A549 (cell line): ENCODE measurements at regions of chr12 and their contacts with region 1.

Region 1: GRCh38 chr12:64610149-64610678 is at the start of gene RASSF3:
- DNase-seq: peak; percentile 53 to 71
- ATAC-seq: peak; percentile 60 to 68
- H3K4me3 ChIP-seq: peak within 1 kb of the TSS; percentile 73
- H3K27ac ChIP-seq: peak within 1 kb of the TSS; percentile 83 to 96
- H3K4me1 ChIP-seq: peaks cover 19% of the 10 kb centered on the region
- CTCF ChIP-seq: no peak
- EP300 ChIP-seq: no peak
- POLR2A ChIP-seq: peak; percentile 54
- RAD21 ChIP-seq: no peak
- polyA plus RNA-seq, gene RASSF3: 35.4 and 40.1 TPM in 2 replicates

Region 2: GRCh38 chr12:64544371-64545080 is 65.7 kb before region 1 on chr12:
- CTCF ChIA-PET with region 1: interaction called, 96 read pairs
- POLR2A ChIA-PET with region 1: no interaction called
- DNase-seq: no peak
- ATAC-seq: peak in 1 of 2 experiments; percentile 48; a peak in 2 of 6 replicates
- H3K4me3 ChIP-seq: no peak overlapping the region
- H3K27ac ChIP-seq: no peak overlapping the region
- H3K4me1 ChIP-seq: no peaks in the 10 kb centered on the region
- CTCF ChIP-seq: no peak
- EP300 ChIP-seq: no peak
- POLR2A ChIP-seq: no peak
- RAD21 ChIP-seq: no peak

Region 3: DNA sequence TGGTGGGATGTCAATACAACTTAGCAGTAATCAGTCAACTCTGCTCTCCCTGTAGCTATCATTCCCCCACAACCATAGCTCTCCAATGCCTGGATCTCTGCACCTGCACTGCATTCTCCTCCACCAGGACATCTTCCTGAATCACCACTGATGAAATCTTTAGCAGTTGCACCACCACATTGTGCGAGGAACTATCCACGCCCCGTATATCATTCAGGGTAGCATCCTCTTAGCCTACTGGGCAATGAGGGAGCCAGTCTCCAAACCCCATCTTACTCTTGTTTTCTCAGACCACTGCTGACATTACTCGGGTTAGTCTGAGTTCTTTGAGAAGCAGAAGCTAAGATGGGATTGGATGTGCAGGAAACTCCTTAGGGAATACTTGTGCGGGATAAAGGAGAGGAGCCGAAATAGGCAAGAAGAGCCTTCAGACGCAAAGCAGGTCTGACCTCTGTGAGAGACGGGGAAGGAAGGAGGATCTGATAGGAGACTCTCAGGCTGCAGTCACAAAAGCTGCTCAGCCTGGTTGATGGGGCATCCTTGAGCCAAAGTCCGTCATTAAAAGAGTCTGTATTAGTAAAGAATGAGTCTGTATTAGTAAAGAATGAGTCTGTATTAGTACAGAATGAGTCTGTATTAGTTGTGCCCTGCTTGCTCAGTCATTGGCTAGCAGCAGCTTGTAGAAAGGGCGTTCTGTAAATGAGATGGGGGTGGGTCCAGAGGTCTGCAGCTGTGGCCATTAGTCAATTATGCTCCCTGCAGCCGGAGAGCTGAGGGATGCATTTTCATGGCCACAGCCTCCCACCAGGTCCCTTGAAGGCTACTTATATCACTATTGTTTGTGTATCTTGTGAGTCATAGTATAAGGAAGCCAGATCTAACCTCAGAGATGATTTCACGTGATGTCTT is 49.6 kb before region 1 on chr12:
- CTCF ChIA-PET with region 1: interaction called, 32 read pairs
- POLR2A ChIA-PET with region 1: no interaction called
- DNase-seq: peak; percentile 61 to 67
- ATAC-seq: peak; percentile 92 to 93
- H3K4me3 ChIP-seq: no peak overlapping the region
- H3K27ac ChIP-seq: peak overlapping the region in 1 of 2 experiments; percentile 23; a peak in 2 of 6 replicates
- H3K4me1 ChIP-seq: peaks cover 19% of the 10 kb centered on the region
- CTCF ChIP-seq: no peak
- EP300 ChIP-seq: no peak
- POLR2A ChIP-seq: no peak
- RAD21 ChIP-seq: no peak

Region 4: GRCh38 chr12:64566732-64567399 is 43.3 kb before region 1 on chr12:
- CTCF ChIA-PET with region 1: interaction called, 32 read pairs
- POLR2A ChIA-PET with region 1: interaction called, 3 read pairs
- DNase-seq: no peak
- ATAC-seq: no peak
- H3K4me3 ChIP-seq: no peak overlapping the region
- H3K27ac ChIP-seq: no peak overlapping the region
- H3K4me1 ChIP-seq: peaks cover under 1% of the 10 kb centered on the region; the same call in 2 of the 3 replicates
- CTCF ChIP-seq: no peak
- EP300 ChIP-seq: no peak
- POLR2A ChIP-seq: no peak
- RAD21 ChIP-seq: no peak

Region 5: DNA sequence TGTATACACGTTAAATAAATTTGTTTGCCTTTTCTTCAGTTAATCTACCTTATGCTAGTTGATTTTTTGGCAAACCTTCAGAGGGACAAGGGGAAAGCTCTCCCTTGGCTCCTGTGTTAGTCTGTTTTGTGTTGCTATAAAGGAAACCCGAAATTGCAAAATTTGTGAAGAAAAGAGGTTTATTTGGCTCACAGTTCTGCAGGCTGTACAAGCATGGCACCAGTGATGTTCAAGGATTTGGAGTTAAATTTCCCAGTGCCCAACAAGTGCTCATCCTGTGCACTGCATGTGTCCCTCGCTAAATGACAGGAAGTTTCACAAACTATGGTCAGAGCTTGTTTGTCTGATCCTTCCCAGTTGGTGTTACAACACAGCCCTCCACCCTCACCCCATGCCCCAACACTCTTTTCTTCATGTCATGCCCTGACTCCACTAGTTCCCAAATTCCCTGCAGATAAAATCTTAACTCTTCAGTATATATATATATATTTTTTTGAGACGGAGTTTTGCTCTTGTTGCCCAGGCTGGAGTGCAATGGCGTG is 13.9 kb before region 1 on chr12:
- CTCF ChIA-PET with region 1: interaction called, 19 read pairs
- POLR2A ChIA-PET with region 1: no interaction called
- DNase-seq: no peak
- ATAC-seq: no peak
- H3K4me3 ChIP-seq: no peak overlapping the region
- H3K27ac ChIP-seq: no peak overlapping the region
- H3K4me1 ChIP-seq: no peaks in the 10 kb centered on the region
- CTCF ChIP-seq: no peak
- EP300 ChIP-seq: no peak
- POLR2A ChIP-seq: no peak
- RAD21 ChIP-seq: no peak

Region 6: GRCh38 chr12:64625243-64626077 is 15.2 kb after region 1 on chr12:
- CTCF ChIA-PET with region 1: interaction called, 4 read pairs
- POLR2A ChIA-PET with region 1: interaction called, 11 read pairs
- DNase-seq: peak; percentile 76 to 92
- ATAC-seq: peak; percentile 95 to 96
- H3K4me3 ChIP-seq: peak overlapping the region; percentile 27
- H3K27ac ChIP-seq: peak overlapping the region; percentile 86 to 93
- H3K4me1 ChIP-seq: peaks cover 65% of the 10 kb centered on the region
- CTCF ChIP-seq: 0 out of 3 replicates have a peak, but pooled peaks have one; percentile 7
- EP300 ChIP-seq: peak; percentile 58 to 60; a peak in 2 of 5 replicates
- POLR2A ChIP-seq: 0 out of 2 replicates have a peak, but pooled peaks have one; percentile 14
- RAD21 ChIP-seq: peak; percentile 23 to 49

Region 7: GRCh38 chr12:64679487-64679983 is 69.3 kb after region 1 on chr12:
- CTCF ChIA-PET with region 1: interaction called, 28 read pairs
- POLR2A ChIA-PET with region 1: interaction called, 6 read pairs
- DNase-seq: peak; percentile 82 to 91
- ATAC-seq: peak; percentile 85 to 86
- H3K4me3 ChIP-seq: peak overlapping the region; percentile 34
- H3K27ac ChIP-seq: peak overlapping the region; percentile 86 to 92
- H3K4me1 ChIP-seq: peaks cover 88% of the 10 kb centered on the region
- CTCF ChIP-seq: no peak
- EP300 ChIP-seq: no peak
- POLR2A ChIP-seq: no peak
- RAD21 ChIP-seq: no peak

Region 8: GRCh38 chr12:64912516-64913255 is 302.5 kb after region 1 on chr12:
- CTCF ChIA-PET with region 1: no interaction called
- POLR2A ChIA-PET with region 1: no interaction called
- DNase-seq: no peak
- ATAC-seq: no peak
- H3K4me3 ChIP-seq: no peak overlapping the region
- H3K27ac ChIP-seq: no peak overlapping the region
- H3K4me1 ChIP-seq: no peaks in the 10 kb centered on the region
- CTCF ChIP-seq: no peak
- EP300 ChIP-seq: no peak
- POLR2A ChIP-seq: no peak
- RAD21 ChIP-seq: no peak